Activated CD4-positive, alpha-beta T cell treated with anti-CD3 and anti-CD28 coated beads for 36 hours (primary cell): ENCODE measurements at regions of chr19 and their contacts with region 1.

Region 1: DNA sequence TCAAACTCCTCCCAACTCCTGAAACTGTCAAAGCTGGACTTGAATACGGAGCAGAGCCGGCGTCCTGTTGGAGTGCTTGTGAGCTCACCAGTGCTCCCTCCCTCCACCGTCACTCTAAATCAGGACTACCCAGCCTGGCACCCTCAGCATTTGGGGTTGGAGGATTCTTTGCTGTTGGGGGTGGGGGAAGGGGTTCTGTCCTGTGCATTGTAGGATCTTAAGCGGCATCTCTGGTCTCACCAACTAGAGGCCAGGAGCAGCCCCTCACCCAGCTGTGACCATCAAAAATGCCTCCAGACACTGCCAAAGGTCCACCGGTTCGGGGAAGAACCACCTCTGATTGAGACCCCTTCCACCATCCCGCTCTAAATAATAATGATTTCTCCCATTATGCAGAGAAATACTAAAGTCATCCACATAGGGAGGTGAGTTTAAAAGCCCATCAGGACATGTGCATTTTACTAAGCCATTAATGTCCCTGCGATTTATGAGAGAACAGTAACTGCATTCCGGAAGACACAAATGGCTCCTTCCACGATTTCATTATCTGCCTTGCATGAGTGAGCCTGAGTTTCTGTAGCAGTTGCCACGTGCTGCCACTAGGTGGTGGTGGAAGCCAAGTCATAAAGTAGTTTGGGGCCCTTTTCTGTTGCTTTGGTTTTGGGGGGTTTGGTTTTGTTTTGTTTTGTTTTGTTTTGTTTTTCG is 16.1 kb upstream of the USP29 start:
- DNase-seq: peak; percentile 74
- ATAC-seq: peak; percentile 83
- H3K4me3 Mint-ChIP-seq: peak overlapping the region; percentile 26
- H3K27ac Mint-ChIP-seq: no peak overlapping the region
- H3K4me1 Mint-ChIP-seq: peaks cover 8% of the 10 kb centered on the region
- H3K27me3 Mint-ChIP-seq: peaks cover 5% of the 10 kb centered on the region

Region 2: DNA sequence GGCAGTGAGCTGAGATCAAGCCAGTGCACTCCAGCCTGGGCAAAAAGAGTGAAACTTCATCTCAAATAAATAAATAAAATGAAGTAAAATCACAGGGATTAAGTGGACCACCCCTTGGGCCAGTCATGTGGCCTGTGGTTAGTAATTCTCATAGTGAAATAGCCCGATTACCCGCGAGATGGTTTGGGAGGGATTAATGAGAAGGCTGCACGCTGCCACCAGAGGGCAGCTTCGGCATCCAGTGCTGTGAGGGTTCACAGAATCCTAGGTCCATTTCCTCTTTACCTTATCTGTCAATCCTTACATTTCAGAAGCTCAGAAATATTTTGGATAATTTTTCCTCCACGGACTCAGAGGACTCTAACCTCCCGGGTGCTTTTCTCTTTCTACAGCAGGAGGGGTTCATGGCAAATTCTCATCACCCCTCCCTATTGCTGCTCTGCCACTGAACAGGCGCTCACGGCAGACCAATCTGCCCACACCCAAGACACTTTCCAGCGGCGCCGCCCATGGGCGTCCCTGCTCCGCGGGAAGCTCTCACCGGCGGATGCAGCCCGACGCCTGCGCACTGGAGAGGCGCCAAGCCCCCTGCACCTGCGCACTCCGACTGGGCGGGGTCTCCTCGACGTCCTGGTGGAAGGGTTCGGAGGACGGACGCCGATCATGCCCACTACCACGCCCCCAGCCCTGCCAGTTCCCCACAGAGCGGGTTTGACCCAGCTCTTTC is 443.2 kb before region 1 on chr19:
- CTCF ChIA-PET with region 1: no interaction called
- POLR2A ChIA-PET with region 1: no interaction called
- intact Hi-C with region 1: loop called in 1 of 2 experiments (anchors 2 kb)
- DNase-seq: peak; percentile 27
- ATAC-seq: no peak
- H3K4me3 Mint-ChIP-seq: no peak overlapping the region
- H3K27ac Mint-ChIP-seq: no peak overlapping the region
- H3K4me1 Mint-ChIP-seq: no peaks in the 10 kb centered on the region
- H3K27me3 Mint-ChIP-seq: no peaks in the 10 kb centered on the region

Region 3: DNA sequence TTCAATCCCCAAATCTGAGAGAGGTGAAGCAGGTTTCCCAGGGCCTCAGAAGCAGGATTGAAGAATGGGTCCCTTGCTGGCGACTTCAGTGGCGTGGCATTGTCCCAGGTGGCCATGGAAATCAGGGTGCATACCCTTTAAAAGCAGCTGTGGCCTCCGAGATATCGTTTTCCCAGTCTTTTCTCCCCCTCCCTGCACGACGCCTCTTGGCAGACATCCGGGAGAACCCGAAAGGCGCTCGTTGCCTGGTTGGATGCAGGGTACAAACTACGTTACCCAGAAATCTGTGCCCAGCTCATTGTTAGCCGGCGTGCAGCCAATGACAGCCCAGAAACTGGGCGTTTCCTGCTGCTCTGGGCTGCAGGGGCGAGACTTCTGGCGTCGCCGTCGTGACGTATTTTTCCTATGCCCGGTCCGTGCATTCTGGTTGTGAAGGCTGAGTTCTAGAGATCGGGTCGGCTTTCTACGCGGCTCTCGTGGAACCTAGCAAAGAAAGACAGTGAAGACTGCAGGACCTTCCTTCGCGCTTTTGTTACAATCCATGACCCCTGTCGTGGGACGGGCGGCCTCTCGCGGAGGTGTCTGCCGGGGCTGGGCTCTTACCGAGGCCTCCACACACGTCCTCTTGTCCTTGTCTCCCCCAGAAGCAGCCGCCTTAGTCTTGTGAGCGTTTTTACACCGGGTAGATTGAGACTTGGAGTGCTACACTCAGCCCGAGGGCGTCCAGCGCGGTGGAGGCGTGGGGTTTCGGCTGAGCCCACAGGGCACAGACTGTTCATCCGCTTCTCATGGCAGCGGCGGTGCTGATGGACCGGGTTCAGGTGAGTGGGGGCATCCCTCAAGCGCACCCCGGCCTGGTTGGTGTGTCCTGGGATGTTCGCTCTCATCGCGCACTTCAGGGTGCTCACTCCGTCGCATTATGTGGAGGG is 247.4 kb after region 1 on chr19 and contains the start of gene ZNF304:
- CTCF ChIA-PET with region 1: no interaction called
- POLR2A ChIA-PET with region 1: no interaction called
- intact Hi-C with region 1: loop called in 1 of 2 experiments (anchors 5 kb)
- DNase-seq: peak; percentile 94
- ATAC-seq: peak; percentile 100
- H3K4me3 Mint-ChIP-seq: peak within 1 kb of the TSS; percentile 96
- H3K27ac Mint-ChIP-seq: peak within 1 kb of the TSS; percentile 90
- H3K4me1 Mint-ChIP-seq: peaks cover 25% of the 10 kb centered on the region
- H3K27me3 Mint-ChIP-seq: peaks cover 4% of the 10 kb centered on the region
- total RNA-seq, gene ZNF304: 6.2 TPM

Region 4: GRCh38 chr19:57719901-57720519 is 616.3 kb after region 1 on chr19:
- CTCF ChIA-PET with region 1: no interaction called
- POLR2A ChIA-PET with region 1: no interaction called
- intact Hi-C with region 1: loop called in 1 of 2 experiments (anchors 10 kb)
- DNase-seq: no peak
- ATAC-seq: no peak
- H3K4me3 Mint-ChIP-seq: no peak overlapping the region
- H3K27ac Mint-ChIP-seq: no peak overlapping the region
- H3K4me1 Mint-ChIP-seq: peaks cover 4% of the 10 kb centered on the region
- H3K27me3 Mint-ChIP-seq: no peaks in the 10 kb centered on the region

Region 5: DNA sequence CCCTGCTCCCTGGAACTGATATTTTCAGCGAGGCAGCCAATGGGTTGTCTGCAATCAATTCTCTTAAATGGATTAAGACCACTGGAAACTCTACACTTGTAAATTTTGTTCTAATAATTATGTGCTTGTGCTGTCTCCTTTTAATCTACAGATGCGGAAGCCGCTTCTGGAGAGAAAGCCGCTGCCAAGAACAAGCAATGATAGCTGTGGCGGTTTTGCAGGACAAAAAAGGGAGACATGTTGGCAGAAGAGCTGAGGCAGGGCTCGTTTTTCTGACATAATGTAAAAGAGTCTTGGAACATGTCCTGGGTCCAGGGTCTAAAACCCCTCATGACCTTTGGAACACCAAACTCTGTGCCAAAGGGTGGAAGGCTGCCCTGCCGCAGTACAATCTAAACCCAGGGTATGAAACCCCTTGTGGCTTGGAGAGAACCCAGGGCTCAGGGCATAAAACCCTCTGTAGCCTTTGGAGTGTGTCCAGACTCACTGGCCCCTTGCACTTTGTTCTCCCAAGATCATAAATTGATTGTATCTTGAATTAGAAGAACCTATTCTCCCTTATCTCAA is 800.0 kb after region 1 on chr19:
- CTCF ChIA-PET with region 1: no interaction called
- POLR2A ChIA-PET with region 1: no interaction called
- intact Hi-C with region 1: loop called in 1 of 2 experiments (anchors 5 kb)
- DNase-seq: no peak
- ATAC-seq: no peak
- H3K4me3 Mint-ChIP-seq: no peak overlapping the region
- H3K27ac Mint-ChIP-seq: peak overlapping the region; percentile 74
- H3K4me1 Mint-ChIP-seq: peaks cover 14% of the 10 kb centered on the region
- H3K27me3 Mint-ChIP-seq: no peaks in the 10 kb centered on the region